AG04450 (cell line): ENCODE measurements at regions of chr14 and their contacts with region 1.

Region 1: DNA sequence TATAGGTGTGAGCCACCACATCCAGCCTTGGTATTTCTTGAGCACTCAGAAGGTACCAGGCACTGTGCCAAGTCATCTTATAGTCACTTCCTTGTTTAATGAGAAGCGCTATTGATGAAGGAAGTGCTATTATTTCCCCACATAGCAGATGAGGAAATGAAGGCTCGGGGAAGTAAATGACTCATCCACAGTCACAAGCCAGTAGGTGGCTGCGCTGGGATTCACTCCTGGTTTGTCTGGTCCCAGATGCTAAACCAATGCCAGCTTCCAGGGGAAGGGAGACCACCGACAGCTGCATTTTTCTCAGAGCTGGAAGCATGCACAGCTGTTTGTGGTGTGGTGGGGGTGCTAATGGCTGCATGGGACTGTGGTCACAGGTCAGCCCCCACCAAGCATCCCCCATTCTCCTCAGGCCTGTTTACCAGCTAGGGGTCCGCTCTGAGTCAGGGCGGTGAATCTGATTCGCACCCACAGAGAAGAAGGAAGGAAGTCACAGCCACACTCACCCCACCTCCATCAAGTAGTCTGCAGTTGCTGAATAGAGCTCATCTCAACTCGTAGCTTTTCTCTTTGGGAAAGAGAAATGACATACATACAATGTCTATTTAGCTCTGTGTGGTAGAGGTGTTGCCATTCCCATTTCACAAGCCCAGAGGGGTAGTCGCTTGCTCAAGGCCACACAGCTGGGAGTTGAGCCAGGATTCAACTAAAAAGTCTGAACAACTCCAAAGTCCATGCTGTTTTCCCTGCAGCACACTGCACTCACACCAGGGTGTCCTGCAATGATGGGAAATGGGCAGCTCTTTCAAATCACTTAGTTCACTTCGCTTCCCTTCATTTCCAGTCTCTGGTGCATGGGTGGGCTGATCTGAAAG is 6.3 kb upstream of the LTBP2 start:
- DNase-seq: no peak
- H3K4me3 ChIP-seq: no peak overlapping the region
- H3K27ac ChIP-seq: peak overlapping the region; percentile 93
- H3K27me3 ChIP-seq: no peaks in the 10 kb centered on the region
- CTCF ChIP-seq: no peak

Region 2: GRCh38 chr14:74577247-74577947 is 40.9 kb before region 1 on chr14:
- CTCF ChIA-PET with region 1: no interaction called
- POLR2A ChIA-PET with region 1: interaction called, 22 read pairs
- DNase-seq: no peak
- H3K4me3 ChIP-seq: no peak overlapping the region
- H3K27ac ChIP-seq: peak overlapping the region; percentile 57
- H3K27me3 ChIP-seq: no peaks in the 10 kb centered on the region
- CTCF ChIP-seq: no peak

Region 3: DNA sequence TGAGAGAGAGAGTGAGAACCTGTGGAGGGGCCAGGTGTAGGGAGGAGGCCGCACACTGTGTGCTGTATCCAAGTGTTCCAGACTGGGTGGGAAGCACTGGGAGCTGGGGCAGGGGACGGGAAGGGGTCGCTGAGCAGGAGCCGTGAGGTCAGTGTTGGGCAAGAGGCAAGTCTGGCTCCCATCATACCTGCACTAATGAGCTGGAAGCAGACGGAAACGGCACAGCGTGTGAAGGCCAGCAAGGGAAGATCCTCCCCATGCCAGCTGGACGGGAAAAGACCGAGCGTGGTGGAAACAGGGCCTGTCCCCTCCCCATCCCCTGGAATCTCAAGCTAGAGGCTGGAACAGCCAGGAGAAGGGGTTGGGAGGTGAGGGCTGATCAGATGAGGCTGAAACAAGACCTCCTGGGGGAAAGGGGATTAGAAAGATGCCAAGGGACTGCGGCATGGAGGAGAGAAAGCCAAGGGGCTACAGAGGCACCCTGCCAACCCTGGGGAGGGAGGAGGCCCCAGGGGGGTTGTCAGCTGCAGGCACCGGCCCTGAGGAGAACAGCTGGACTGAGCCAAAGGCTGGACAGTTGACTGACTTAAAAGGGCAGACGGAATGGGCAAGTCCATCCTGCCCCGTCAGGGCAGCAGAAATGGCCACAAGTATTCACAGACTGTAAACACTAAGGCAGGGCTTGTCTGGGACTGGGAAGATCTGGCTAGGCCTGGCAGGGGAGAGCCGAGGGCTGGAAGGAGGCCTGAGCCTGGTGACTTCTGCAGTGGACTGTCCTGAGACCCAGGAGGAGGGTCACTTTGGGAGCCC is 12.8 kb after region 1 on chr14:
- CTCF ChIA-PET with region 1: interaction called, 4 read pairs
- POLR2A ChIA-PET with region 1: interaction called, 10 read pairs
- DNase-seq: no peak
- H3K4me3 ChIP-seq: no peak overlapping the region
- H3K27ac ChIP-seq: peak overlapping the region; percentile 21
- H3K27me3 ChIP-seq: no peaks in the 10 kb centered on the region
- CTCF ChIP-seq: no peak

Region 4: DNA sequence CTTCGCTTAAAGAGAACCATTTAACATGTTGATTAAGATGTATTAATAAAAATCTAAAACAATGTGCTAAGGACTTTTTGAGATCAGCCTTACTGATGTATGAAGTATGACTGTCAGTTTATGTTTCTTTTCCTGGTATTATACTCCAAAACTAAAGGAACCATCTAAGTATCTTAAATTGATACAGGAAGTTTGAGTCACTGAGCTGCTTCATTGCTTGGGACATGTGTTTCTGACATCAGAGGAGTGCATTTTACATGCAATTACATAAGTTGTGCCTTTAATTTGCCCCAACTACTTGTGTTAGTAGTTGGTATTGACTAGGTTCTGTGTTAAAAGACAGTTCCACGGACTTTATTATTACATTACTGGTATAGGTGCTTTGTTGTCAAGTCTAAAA is 206.7 kb after region 1 on chr14:
- CTCF ChIA-PET with region 1: no interaction called
- POLR2A ChIA-PET with region 1: no interaction called
- DNase-seq: no peak
- H3K4me3 ChIP-seq: no peak overlapping the region
- H3K27ac ChIP-seq: no peak overlapping the region
- H3K27me3 ChIP-seq: no peaks in the 10 kb centered on the region
- CTCF ChIP-seq: no peak

Region 5: DNA sequence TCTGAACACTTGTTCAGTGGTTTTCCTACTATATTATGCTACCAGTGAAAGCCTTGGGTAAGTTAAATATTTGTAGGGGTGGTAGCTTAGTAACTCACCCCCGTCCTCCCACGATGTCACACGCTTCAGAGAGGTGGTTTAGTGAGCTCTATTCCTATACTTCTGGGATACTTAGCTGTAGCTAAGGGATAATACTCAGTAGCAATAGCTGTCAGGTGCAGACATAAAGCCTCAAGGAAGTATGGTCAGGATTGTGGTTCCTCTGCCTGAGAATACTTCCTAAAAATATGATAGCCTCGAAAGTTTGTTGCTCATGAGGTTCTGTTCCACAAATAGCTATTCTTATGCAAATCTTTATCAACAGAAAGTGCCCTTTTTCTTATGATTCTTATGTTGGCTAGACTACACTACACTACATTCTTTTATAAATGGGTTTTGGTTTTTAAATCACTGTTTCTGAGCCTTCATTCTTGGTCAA is 275.3 kb after region 1 on chr14:
- CTCF ChIA-PET with region 1: no interaction called
- POLR2A ChIA-PET with region 1: no interaction called
- DNase-seq: no peak
- H3K4me3 ChIP-seq: no peak overlapping the region
- H3K27ac ChIP-seq: no peak overlapping the region
- H3K27me3 ChIP-seq: no peaks in the 10 kb centered on the region
- CTCF ChIP-seq: no peak